Ascending aorta (tissue), 2 donors: ENCODE measurements at regions of chr9 and their contacts with region 1.

Region 1: DNA sequence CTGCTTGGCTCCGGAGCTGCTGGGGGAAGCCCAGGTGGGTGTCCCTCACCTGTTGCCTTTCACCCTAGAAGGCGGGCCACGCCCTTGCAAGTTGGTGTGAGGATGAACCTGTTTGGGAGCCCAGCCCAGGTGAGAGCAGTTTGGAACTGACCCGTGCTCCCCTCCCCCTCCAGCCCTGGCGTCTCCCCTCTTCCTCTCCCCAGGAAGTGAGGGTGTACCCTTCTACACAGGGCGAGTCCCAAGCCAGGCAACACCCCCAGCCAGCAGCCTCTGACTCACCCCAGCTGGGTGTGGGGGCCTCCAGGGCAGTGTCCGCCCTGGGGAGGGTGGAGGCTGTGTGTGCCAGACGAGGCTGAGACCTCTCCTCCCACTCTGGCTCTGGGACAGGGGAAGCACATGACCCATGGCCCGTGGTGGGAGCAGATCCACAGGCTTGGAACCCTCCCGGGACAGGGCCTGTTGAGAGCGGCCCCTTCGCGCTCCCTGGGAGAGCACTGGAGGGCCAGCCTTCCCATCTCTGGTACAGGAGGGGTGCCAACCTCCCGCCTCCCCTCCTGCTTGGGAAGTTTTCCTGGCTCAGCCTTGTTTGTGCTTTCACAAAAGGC is 10.5 kb downstream of the LRRC8A start:
- DNase-seq: peak; percentile 88 to 98
- H3K4me3 ChIP-seq: peak overlapping the region in 1 of 2 donors; percentile 34
- H3K27ac ChIP-seq: peak overlapping the region; percentile 89 to 92
- H3K4me1 ChIP-seq: peaks cover 20 to 47% of the 10 kb centered on the region in 2 donors
- H3K27me3 ChIP-seq: no peaks in the 10 kb centered on the region
- CTCF ChIP-seq: no peak

Region 2: GRCh38 chr9:128911529-128912035 is 19.2 kb after region 1 on chr9:
- intact Hi-C with region 1: loop called (anchors 1 kb)
- DNase-seq: peak; percentile 79 to 94
- H3K4me3 ChIP-seq: peak overlapping the region in 1 of 2 donors; percentile 6
- H3K27ac ChIP-seq: peak overlapping the region; percentile 94 to 95
- H3K4me1 ChIP-seq: peaks cover 52 to 76% of the 10 kb centered on the region in 2 donors
- H3K27me3 ChIP-seq: no peaks in the 10 kb centered on the region
- CTCF ChIP-seq: no peak